Activated CD4-positive, alpha-beta memory T cell treated with anti-CD3 and anti-CD28 coated beads, Interleukin-2, amount 10 ng/mL, durations not matched to agents 7 days and 5 days (primary cell): ENCODE measurements at regions of chr2 and their contacts with region 1.

Region 1: GRCh38 chr2:95053543-95053942 is 28.0 kb downstream of the MAL start:
- DNase-seq: no peak
- H3K4me3 Mint-ChIP-seq: no peak overlapping the region
- H3K27ac Mint-ChIP-seq: no peak overlapping the region
- H3K4me1 Mint-ChIP-seq: peaks cover 48% of the 10 kb centered on the region
- H3K27me3 Mint-ChIP-seq: no peaks in the 10 kb centered on the region

Region 2: GRCh38 chr2:94982675-94983074 is 70.9 kb before region 1 on chr2:
- CTCF ChIA-PET with region 1: no interaction called
- POLR2A ChIA-PET with region 1: no interaction called
- DNase-seq: no peak
- H3K4me3 Mint-ChIP-seq: no peak overlapping the region
- H3K27ac Mint-ChIP-seq: no peak overlapping the region
- H3K4me1 Mint-ChIP-seq: peaks cover 5% of the 10 kb centered on the region
- H3K27me3 Mint-ChIP-seq: peaks cover 11% of the 10 kb centered on the region

Region 3: DNA sequence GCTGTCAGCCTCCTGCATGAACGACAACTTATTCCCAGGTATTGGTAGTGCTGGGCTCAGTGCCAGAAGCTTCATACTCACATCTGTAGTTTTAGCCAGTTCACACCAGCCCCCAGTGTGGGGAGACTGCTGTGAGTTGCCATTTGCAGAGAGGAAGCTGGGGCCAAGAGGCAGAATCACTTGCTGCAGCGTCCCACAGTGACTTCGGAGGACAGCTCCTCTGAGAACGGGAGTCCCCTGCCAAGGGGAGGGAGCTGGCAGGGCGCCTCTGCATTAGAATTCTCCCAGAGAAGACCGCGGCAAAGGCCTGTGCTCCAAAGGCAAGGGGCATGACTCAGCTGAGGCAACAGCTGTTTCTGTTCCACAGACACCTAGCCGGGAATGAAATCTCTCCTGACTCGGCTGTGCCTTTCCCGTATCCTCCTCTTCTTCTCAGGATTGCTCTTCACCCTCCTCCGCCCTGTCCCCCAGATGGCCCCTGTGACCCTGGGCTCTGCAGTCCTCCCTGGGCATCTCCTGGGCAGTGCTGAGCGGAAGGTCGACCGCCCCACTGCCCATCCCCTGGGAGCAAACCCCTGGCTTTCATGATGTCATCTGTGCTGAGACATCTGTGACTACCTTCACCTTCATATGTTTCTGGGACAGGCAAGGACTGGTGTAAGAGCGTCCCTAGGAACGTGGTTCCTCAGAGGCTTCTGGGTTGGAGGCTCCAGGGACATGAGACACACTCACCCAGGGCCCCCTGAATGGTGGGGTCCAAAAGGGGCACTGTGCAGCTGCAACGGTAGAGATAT is 10.0 kb before region 1 on chr2:
- CTCF ChIA-PET with region 1: interaction called, 3 read pairs
- POLR2A ChIA-PET with region 1: interaction called, 11 read pairs
- DNase-seq: no peak
- H3K4me3 Mint-ChIP-seq: no peak overlapping the region
- H3K27ac Mint-ChIP-seq: peak overlapping the region; percentile 41
- H3K4me1 Mint-ChIP-seq: peaks cover 60% of the 10 kb centered on the region
- H3K27me3 Mint-ChIP-seq: no peaks in the 10 kb centered on the region

Region 4: DNA sequence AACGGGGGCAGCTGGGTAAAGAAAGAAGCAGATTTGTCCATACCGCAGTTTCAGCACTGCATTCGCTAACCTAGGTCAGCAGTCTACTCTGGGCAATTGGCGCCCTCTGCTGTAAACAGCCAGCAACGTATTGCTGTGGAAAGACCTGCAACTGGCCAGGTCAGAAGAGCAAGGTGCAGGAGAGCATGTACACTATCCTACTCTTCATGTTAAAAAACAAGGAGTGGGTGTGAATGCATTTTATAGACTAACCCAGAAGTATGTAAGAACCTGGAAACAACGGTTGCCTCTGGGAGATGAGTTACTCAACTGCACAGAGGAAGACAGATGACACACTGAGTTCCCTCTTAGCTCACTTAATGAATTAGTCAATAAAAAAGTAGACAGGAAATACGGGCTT is 61.9 kb after region 1 on chr2:
- CTCF ChIA-PET with region 1: interaction called, 11 read pairs
- POLR2A ChIA-PET with region 1: no interaction called
- DNase-seq: peak; percentile 81
- H3K4me3 Mint-ChIP-seq: no peak overlapping the region
- H3K27ac Mint-ChIP-seq: peak overlapping the region; percentile 18
- H3K4me1 Mint-ChIP-seq: peaks cover 42% of the 10 kb centered on the region
- H3K27me3 Mint-ChIP-seq: no peaks in the 10 kb centered on the region